ENCODE measurements at regions of chr20 and their contacts with region 1.

Region 1: DNA sequence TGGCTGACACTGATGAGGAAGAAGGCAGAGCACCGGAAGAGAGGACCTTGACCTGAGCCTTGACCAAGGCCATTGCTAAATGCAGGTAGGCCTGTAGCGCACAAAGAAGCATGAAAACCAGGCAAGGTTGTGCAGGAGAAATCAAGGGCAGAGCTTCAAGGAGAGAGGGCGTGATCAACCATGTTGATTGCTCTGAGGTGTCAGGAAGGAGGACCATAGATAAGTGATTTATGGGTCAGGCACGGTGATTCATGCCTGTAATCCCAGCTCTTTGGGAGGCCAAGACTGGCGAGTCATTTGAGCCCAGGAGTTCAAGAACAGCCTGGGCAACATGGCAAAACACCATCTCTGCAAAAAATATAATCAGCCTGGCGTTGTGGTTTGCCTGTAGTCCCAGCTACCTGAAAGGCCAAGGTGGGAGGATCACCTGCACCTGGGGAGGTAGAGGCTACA is 12.4 kb downstream of the PLCG1 start:
- DNase-seq: no peak
- H3K4me3 Mint-ChIP-seq: no peak overlapping the region
- H3K27ac Mint-ChIP-seq: peak overlapping the region; percentile 33
- H3K4me1 Mint-ChIP-seq: peaks cover 97% of the 10 kb centered on the region
- H3K27me3 Mint-ChIP-seq: no peaks in the 10 kb centered on the region

Region 2: DNA sequence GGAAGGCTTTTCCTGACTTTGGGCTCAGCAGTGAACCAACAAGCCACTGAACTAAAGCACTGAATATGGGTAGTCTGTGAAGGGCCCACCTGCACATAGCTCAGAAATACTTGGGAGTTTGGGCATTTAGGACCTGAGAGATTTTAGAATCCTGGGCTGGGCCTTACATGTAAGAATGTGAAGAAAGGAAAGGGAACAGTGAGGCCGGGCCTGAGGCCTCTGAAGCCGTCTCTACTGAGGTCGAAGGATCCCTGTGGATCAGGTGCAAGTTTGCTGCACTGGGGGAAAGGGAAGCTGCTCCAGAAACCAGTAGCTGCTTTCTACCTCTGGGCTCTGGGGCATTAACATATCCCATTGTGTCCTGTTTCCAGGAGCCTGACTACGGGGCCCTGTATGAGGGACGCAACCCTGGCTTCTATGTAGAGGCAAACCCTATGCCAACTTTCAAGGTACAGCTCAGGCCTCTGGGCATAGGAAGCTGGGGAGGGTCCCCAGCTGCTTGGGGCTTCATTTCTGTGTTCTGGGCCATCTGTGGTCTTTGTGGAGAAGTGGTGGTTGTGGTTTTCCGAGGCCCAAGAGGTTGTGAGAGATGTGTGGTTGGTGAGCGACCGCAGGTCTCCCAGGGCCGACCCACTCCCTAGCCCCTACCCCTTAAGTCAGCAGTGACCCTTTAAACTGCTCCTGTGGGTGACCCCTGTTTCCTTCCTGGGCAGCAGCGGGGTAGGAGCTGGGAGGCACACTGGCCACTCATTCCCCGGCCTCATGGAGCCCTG is 18.0 kb after region 1 on chr20:
- CTCF ChIA-PET with region 1: interaction called, 7 read pairs
- POLR2A ChIA-PET with region 1: interaction called, 466 read pairs
- DNase-seq: no peak
- H3K4me3 Mint-ChIP-seq: no peak overlapping the region
- H3K27ac Mint-ChIP-seq: peak overlapping the region; percentile 38
- H3K4me1 Mint-ChIP-seq: peaks cover 35% of the 10 kb centered on the region
- H3K27me3 Mint-ChIP-seq: no peaks in the 10 kb centered on the region

Measured in activated CD4-positive, alpha-beta memory T cell treated with anti-CD3 and anti-CD28 coated beads, Interleukin-2, amount 10 ng/mL, durations not matched to agents 7 days and 5 days (primary cell).